ENCODE measurements at regions of chr17 and their contacts with region 1.

Region 1: DNA sequence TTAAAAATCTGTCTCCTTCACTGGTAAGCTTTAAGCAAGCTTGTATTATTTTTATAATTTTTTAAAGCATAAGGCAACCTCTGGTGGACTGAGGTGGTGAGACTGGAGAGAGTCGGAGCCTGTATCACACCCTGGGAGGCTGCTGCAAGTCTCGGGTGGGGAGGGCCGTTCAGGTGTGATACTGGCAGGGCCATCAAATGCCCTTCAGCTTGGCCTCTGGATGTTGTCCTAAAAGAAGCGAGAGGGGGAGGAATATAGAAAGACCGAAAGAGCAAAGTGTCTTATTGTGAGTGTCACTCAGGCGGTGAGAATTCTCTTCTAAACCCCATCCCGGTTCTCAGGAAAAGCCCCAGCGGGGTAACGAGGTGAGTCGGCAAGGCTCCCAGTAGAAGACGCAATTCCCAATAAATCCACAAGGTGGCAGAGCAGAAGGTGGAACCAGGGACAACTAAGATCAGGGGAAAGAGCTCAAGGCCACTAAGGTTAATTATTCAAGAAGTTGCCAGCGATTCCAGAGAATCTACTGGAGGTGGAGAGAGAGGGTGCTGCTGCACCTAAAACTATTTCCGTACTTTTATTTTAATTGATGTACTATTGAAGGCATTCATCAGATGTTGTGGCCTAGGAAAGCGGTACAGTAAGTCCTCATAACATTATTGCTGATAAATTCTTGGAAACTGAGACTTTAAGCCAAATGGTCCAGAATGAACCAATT is 14.1 kb downstream of the C17orf67 start:
- DNase-seq: peak; percentile 81 to 91
- ATAC-seq: peak; percentile 94 to 98
- H3K4me3 ChIP-seq: no peak overlapping the region
- H3K27ac ChIP-seq: peak overlapping the region in 1 of 2 experiments; percentile 47; a peak in 1 of 6 replicates
- H3K4me1 ChIP-seq: peaks cover 9% of the 10 kb centered on the region
- CTCF ChIP-seq: peak; percentile 94
- EP300 ChIP-seq: no peak
- POLR2A ChIP-seq: no peak
- RAD21 ChIP-seq: peak; percentile 84 to 85

Region 2: DNA sequence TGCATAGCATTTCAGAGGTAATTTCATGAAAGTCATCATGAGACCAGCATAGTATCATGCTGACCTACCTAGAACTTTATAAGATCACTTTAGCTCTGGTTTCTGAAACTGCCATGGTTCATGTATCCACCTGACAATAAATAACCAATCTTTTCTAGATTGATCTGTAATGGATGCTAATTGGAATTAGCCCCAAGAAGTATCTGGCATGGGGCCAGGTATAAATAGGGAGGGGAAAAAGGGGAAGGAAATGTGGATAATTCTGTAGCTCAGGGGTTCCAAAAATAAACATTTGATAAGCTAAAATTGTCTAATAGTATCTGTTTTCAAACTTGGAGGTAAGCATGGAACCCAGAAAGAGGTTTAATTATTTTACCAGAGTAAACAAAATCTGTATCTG is 412.8 kb before region 1 on chr17:
- CTCF ChIA-PET with region 1: no interaction called
- POLR2A ChIA-PET with region 1: no interaction called
- DNase-seq: no peak
- ATAC-seq: no peak
- H3K4me3 ChIP-seq: no peak overlapping the region
- H3K27ac ChIP-seq: no peak overlapping the region
- H3K4me1 ChIP-seq: no peaks in the 10 kb centered on the region
- CTCF ChIP-seq: no peak
- EP300 ChIP-seq: no peak
- POLR2A ChIP-seq: no peak
- RAD21 ChIP-seq: no peak

Region 3: GRCh38 chr17:56737366-56738161 is 82.0 kb before region 1 on chr17:
- CTCF ChIA-PET with region 1: no interaction called
- POLR2A ChIA-PET with region 1: no interaction called
- DNase-seq: no peak
- ATAC-seq: no peak
- H3K4me3 ChIP-seq: no peak overlapping the region
- H3K27ac ChIP-seq: no peak overlapping the region
- H3K4me1 ChIP-seq: no peaks in the 10 kb centered on the region
- CTCF ChIP-seq: no peak
- EP300 ChIP-seq: no peak
- POLR2A ChIP-seq: no peak
- RAD21 ChIP-seq: no peak

Region 4: DNA sequence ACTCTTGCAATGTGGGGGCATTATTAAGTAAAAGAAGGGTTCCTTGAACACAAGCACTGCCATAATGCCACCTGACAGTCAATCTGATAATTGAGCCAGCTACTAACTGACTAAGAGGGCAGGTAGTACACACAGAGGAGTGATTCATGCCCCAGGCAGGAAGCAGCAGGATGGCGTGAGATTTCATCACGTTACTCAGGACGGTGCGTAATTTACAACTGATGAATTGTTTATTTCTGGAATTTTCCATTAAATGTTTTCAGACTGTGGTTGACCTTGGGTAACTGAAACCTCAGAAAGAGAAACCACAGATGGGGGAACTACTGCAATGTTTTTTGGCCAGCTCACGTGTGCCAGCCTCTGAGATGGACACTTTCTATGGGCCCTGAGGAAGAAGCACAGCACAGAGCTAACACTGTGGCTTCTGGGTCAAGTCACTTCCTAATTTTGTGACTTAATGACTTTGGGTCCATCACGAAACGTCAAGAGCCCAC is 32.6 kb before region 1 on chr17:
- CTCF ChIA-PET with region 1: interaction called, 18 read pairs
- POLR2A ChIA-PET with region 1: no interaction called
- DNase-seq: peak; percentile 27 to 70
- ATAC-seq: peak; percentile 87 to 94
- H3K4me3 ChIP-seq: no peak overlapping the region
- H3K27ac ChIP-seq: peak overlapping the region; percentile 70 to 72
- H3K4me1 ChIP-seq: peaks cover 27% of the 10 kb centered on the region
- CTCF ChIP-seq: no peak
- EP300 ChIP-seq: peak in 1 of 2 experiments; percentile 32; a peak in 2 of 5 replicates
- POLR2A ChIP-seq: no peak
- RAD21 ChIP-seq: no peak

Region 5: GRCh38 chr17:56833809-56834379 is 14.3 kb after region 1 on chr17 and contains the starts of genes C17orf67 and DGKE:
- CTCF ChIA-PET with region 1: interaction called, 65 read pairs
- POLR2A ChIA-PET with region 1: interaction called, 8 read pairs
- DNase-seq: peak; percentile 85 to 97
- ATAC-seq: peak; percentile 81 to 93
- H3K4me3 ChIP-seq: peak within 1 kb of the TSS; percentile 85
- H3K27ac ChIP-seq: peak within 1 kb of the TSS; percentile 87 to 89
- H3K4me1 ChIP-seq: peaks cover 25% of the 10 kb centered on the region
- CTCF ChIP-seq: no peak
- EP300 ChIP-seq: no peak
- POLR2A ChIP-seq: peak; percentile 87
- RAD21 ChIP-seq: no peak
- polyA plus RNA-seq, gene C17orf67: 1.8 and 2.9 TPM in 2 replicates
- polyA plus RNA-seq, gene DGKE: 4.6 and 5.8 TPM in 2 replicates

Region 6: DNA sequence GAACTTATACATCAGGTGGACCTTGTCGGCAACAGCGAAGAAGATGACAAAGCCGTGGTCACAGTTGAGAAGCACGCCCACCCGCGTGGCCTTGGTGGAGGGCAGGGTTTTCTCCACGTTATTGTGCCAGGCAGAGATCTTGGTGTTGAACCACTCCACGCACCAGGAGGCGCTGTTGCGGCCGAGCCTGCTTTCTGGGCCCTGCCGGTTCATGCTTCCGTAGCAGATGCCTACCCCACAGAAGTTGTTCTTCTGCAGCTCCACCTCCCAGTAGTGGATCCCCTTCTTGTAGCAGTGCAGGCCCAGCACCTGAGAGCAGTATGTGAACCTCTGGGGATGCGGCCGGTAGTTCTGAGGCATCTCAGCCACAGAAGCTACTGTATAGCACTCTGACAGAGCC is 72.2 kb after region 1 on chr17:
- CTCF ChIA-PET with region 1: interaction called, 23 read pairs
- POLR2A ChIA-PET with region 1: no interaction called
- DNase-seq: peak in 1 of 2 experiments; percentile 30
- ATAC-seq: peak in 1 of 2 experiments; percentile 57; a peak in 3 of 6 replicates
- H3K4me3 ChIP-seq: no peak overlapping the region
- H3K27ac ChIP-seq: no peak overlapping the region
- H3K4me1 ChIP-seq: peaks cover 6% of the 10 kb centered on the region
- CTCF ChIP-seq: 0 out of 3 replicates have a peak, but pooled peaks have one; percentile 22
- EP300 ChIP-seq: no peak
- POLR2A ChIP-seq: no peak
- RAD21 ChIP-seq: no peak

Region 7: DNA sequence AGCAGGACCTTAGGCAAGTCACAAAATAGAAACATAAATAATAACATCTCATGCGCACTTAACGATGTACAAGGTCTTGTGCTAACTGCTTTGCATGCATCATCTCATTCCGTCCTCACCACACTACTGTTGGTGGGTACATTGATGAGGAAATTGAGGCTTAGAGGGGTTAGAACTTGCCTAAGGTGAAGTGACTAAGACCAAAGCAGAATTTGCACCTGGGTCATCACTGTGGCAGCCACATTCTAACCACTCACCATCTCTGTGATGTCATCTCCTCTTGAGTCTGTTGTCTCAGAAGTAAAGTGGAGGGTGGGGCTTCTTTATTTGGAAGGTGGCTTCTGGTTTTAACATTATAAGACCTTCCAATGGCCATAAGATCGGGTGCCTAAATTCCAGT is 114.7 kb after region 1 on chr17:
- CTCF ChIA-PET with region 1: interaction called, 283 read pairs
- POLR2A ChIA-PET with region 1: interaction called, 3 read pairs
- DNase-seq: no peak
- ATAC-seq: no peak
- H3K4me3 ChIP-seq: no peak overlapping the region
- H3K27ac ChIP-seq: no peak overlapping the region
- H3K4me1 ChIP-seq: no peaks in the 10 kb centered on the region
- CTCF ChIP-seq: no peak
- EP300 ChIP-seq: no peak
- POLR2A ChIP-seq: no peak
- RAD21 ChIP-seq: no peak

Region 8: GRCh38 chr17:56960596-56961538 is 141.3 kb after region 1 on chr17 and contains the start of gene COIL:
- CTCF ChIA-PET with region 1: interaction called, 21 read pairs
- POLR2A ChIA-PET with region 1: no interaction called
- DNase-seq: peak; percentile 92 to 96
- ATAC-seq: peak; percentile 97 to 99
- H3K4me3 ChIP-seq: peak within 1 kb of the TSS; percentile 75
- H3K27ac ChIP-seq: peak within 1 kb of the TSS; percentile 91 to 92
- H3K4me1 ChIP-seq: peaks cover 17% of the 10 kb centered on the region; the same call in 2 of the 3 replicates
- CTCF ChIP-seq: peak; percentile 94
- EP300 ChIP-seq: no peak
- POLR2A ChIP-seq: peak; percentile 69
- RAD21 ChIP-seq: peak; percentile 64 to 73
- polyA plus RNA-seq, gene COIL: 13.5 and 16.9 TPM in 2 replicates

Region 9: GRCh38 chr17:57009737-57010445 is 190.3 kb after region 1 on chr17:
- CTCF ChIA-PET with region 1: interaction called, 23 read pairs
- POLR2A ChIA-PET with region 1: no interaction called
- DNase-seq: peak; percentile 72 to 79
- ATAC-seq: peak; percentile 96 to 97
- H3K4me3 ChIP-seq: no peak overlapping the region
- H3K27ac ChIP-seq: no peak overlapping the region
- H3K4me1 ChIP-seq: peaks cover 11% of the 10 kb centered on the region; the same call in 2 of the 3 replicates
- CTCF ChIP-seq: peak; percentile 59
- EP300 ChIP-seq: no peak
- POLR2A ChIP-seq: no peak
- RAD21 ChIP-seq: peak; percentile 48 to 65; a peak in 4 of 5 replicates

Measured in A549 (cell line).